ENCODE measurements at regions of chr13 and their contacts with region 1.

Region 1: GRCh38 chr13:45393941-45394570 is 24.1 kb downstream of the SLC25A30 start:
- DNase-seq: peak; percentile 56
- ATAC-seq: no peak
- H3K4me3 Mint-ChIP-seq: no peak overlapping the region
- H3K27ac Mint-ChIP-seq: no peak overlapping the region
- H3K4me1 Mint-ChIP-seq: peaks cover 46% of the 10 kb centered on the region
- H3K27me3 Mint-ChIP-seq: no peaks in the 10 kb centered on the region

Region 2: GRCh38 chr13:45356966-45357672 is 36.9 kb before region 1 on chr13:
- CTCF ChIA-PET with region 1: no interaction called
- POLR2A ChIA-PET with region 1: no interaction called
- intact Hi-C with region 1: no loop called
- DNase-seq: no peak
- ATAC-seq: peak; percentile 57
- H3K4me3 Mint-ChIP-seq: no peak overlapping the region
- H3K27ac Mint-ChIP-seq: peak overlapping the region; percentile 68
- H3K4me1 Mint-ChIP-seq: peaks cover 18% of the 10 kb centered on the region
- H3K27me3 Mint-ChIP-seq: no peaks in the 10 kb centered on the region

Region 3: DNA sequence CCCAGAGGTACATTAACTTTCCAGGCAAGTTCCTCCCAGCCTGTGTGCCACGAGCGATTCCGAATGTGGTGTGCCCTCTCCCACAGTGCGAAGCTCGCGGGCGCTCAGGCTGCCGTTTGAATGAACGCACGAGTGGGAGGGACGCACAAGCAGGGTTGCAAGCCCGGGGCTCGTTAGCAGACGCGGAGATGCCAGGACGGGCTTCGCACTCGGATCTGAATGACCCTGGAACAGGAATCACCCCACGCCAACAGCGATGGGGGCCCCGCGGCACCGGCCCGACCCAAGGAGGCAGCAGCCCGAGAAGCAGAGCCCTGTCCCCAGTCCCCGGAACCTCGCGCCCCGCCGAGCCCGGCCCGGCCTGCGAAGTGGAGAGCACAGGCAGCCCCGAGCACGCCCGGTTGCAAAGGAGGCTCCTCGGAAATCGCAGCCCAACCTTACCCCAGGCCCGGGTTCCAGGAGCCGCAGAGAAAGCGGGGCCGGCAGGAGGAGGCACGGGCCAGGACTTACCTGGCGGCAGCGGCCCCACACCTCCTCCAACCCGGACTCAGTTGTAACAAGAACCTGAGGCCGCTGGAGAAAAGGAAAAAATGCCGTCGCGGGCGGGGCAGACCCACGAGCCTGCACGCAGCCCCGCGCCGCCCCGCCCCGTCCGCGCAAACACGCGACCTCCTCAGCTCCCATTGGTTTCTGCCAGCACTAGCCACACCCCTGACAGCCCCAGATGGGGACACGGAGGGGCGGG is 23.9 kb after region 1 on chr13 and contains the start of gene SLC25A30:
- CTCF ChIA-PET with region 1: interaction called, 13 read pairs
- POLR2A ChIA-PET with region 1: interaction called, 5 read pairs
- intact Hi-C with region 1: loop called (anchors 1 to 2 kb)
- DNase-seq: peak; percentile 94
- ATAC-seq: peak; percentile 92
- H3K4me3 Mint-ChIP-seq: peak within 1 kb of the TSS; percentile 84
- H3K27ac Mint-ChIP-seq: peak within 1 kb of the TSS; percentile 92
- H3K4me1 Mint-ChIP-seq: peaks cover 23% of the 10 kb centered on the region
- H3K27me3 Mint-ChIP-seq: no peaks in the 10 kb centered on the region
- total RNA-seq, gene SLC25A30: 17.7 to 18.4 TPM